ENCODE measurements at regions of chr1 and their contacts with region 1.

Region 1: DNA sequence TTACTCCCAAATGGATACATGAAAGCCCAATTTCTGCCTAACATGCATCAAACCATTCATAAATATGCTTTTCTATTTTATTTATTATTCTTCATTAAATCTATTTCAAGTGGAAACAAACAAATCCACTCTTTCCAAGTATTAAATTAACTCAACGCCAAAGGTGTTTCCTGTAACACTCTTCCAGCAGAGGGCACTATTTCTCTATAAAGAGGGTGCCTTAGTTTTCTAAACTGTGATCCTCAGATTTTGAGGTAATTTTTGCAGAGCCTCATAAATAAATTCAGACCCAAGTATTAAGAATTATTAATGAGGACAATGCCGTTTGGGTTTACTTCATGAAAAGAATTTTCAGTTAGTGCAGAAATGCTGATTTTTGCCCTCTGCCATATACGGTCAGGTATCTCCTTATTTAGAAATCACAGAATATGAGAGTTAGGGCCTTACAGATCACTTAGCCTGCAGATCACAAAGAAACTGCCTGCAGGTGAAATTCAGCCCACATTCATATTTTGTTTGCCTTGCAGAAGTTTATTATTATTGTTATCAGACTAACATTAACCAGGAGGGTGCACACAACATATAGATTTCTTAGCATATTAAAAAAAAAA is 40.1 kb upstream of the MYSM1 start:
- DNase-seq: peak; percentile 39
- ATAC-seq: peak; percentile 75; the same call in 1 of the 2 replicates
- H3K4me3 ChIP-seq: no peak overlapping the region
- H3K27ac ChIP-seq: no peak overlapping the region
- H3K4me1 ChIP-seq: no peaks in the 10 kb centered on the region; a peak in 1 of 4 replicates
- H3K27me3 ChIP-seq: no peaks in the 10 kb centered on the region
- CTCF ChIP-seq: peak; percentile 59 to 87 (median 83)
- POLR2A ChIP-seq: no peak
- RAD21 ChIP-seq: peak; percentile 96

Region 2: DNA sequence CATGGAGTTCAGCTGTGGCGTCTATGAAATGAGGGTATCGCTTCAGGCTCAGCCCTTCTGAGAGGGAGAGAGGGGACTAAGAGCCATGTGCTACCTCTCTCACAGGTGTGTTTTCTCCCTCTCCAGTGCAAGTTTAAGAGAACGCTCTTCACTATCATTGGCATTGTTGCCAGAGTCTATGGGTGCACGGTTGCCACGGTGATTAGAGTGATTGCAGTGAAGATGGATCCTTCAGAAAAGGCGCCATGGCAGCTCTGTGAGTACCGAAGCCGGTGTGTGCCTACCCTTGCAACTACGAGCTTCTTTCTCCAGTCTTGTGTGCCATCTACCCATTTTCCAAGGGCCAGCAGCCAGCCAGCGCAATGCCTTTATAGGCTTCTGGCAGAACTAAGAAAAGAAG is 483.9 kb before region 1 on chr1:
- CTCF ChIA-PET with region 1: no interaction called
- POLR2A ChIA-PET with region 1: no interaction called
- RAD21 ChIA-PET with region 1: no interaction called
- intact Hi-C with region 1: no loop called
- DNase-seq: no peak
- ATAC-seq: no peak
- H3K4me3 ChIP-seq: no peak overlapping the region
- H3K27ac ChIP-seq: no peak overlapping the region
- H3K4me1 ChIP-seq: no peaks in the 10 kb centered on the region
- H3K27me3 ChIP-seq: peaks cover 36% of the 10 kb centered on the region
- CTCF ChIP-seq: no peak
- POLR2A ChIP-seq: no peak
- RAD21 ChIP-seq: no peak

Region 3: DNA sequence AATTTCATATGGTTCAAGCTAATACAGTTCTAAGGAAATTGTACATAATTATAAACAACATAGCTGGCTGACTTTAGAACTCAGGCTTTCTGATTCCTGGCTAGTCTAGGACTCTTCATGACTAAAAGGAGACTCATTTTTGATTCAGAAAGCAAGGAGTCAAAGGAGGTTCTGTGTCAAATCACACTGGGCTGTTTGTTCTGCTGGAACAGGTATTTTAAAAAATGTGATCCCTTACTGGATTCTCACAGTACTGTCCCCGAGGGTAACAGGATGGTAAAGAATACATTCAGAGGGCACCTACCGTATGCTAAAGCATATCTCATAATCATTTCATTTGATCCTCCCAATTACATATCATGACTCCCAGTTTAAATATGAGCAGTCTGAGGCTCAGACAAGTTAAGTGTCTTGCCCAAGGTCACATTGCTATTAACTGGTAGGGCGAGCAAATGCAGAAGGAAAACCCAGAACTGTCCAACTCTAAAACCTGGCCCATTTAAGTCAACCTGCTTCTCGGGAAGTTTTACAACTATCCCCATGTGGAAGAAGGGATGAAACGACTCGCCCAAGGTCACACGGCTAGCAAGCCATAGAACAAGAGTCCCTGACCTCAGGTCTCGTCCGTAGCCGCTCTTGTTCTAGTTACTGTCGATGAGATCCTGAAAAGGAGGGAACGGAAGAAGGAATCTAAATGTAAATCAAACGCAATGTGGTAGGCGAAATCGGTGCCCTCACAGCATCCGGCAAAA is 40.8 kb before region 1 on chr1:
- CTCF ChIA-PET with region 1: no interaction called
- POLR2A ChIA-PET with region 1: no interaction called
- RAD21 ChIA-PET with region 1: no interaction called
- intact Hi-C with region 1: no loop called
- DNase-seq: no peak
- ATAC-seq: peak; percentile 15
- H3K4me3 ChIP-seq: peak overlapping the region; percentile 73 to 85
- H3K27ac ChIP-seq: peak overlapping the region; percentile 48
- H3K4me1 ChIP-seq: peaks cover 6 to 14% of the 10 kb centered on the region in 2 experiments; a peak in 3 of 4 replicates
- H3K27me3 ChIP-seq: no peaks in the 10 kb centered on the region
- CTCF ChIP-seq: no peak
- POLR2A ChIP-seq: peak; percentile 1
- RAD21 ChIP-seq: no peak

Region 4: GRCh38 chr1:58768971-58769808 is 29.2 kb after region 1 on chr1:
- CTCF ChIA-PET with region 1: interaction called, 3 read pairs
- POLR2A ChIA-PET with region 1: no interaction called
- RAD21 ChIA-PET with region 1: no interaction called
- intact Hi-C with region 1: loop called (anchors 2 kb)
- DNase-seq: no peak
- ATAC-seq: peak; percentile 84
- H3K4me3 ChIP-seq: no peak overlapping the region
- H3K27ac ChIP-seq: no peak overlapping the region
- H3K4me1 ChIP-seq: no peaks in the 10 kb centered on the region; a peak in 1 of 4 replicates
- H3K27me3 ChIP-seq: no peaks in the 10 kb centered on the region
- CTCF ChIP-seq: peak; percentile 68 to 86 (median 83)
- POLR2A ChIP-seq: no peak
- RAD21 ChIP-seq: peak; percentile 87

Region 5: GRCh38 chr1:59699227-59699847 is 959.4 kb after region 1 on chr1:
- CTCF ChIA-PET with region 1: interaction called, 14 read pairs
- POLR2A ChIA-PET with region 1: no interaction called
- RAD21 ChIA-PET with region 1: no interaction called
- intact Hi-C with region 1: loop called (anchors 1 kb)
- DNase-seq: peak; percentile 15
- ATAC-seq: no peak
- H3K4me3 ChIP-seq: no peak overlapping the region
- H3K27ac ChIP-seq: no peak overlapping the region
- H3K4me1 ChIP-seq: no peaks in the 10 kb centered on the region
- H3K27me3 ChIP-seq: no peaks in the 10 kb centered on the region
- CTCF ChIP-seq: peak; percentile 67 to 93 (median 89); a peak in 5 of 6 replicates
- POLR2A ChIP-seq: no peak
- RAD21 ChIP-seq: peak; percentile 93

Region 6: GRCh38 chr1:59759156-59759925 is 1019.4 kb after region 1 on chr1:
- CTCF ChIA-PET with region 1: interaction called, 8 read pairs
- POLR2A ChIA-PET with region 1: no interaction called
- RAD21 ChIA-PET with region 1: no interaction called
- intact Hi-C with region 1: loop called (anchors 1 kb)
- DNase-seq: peak; percentile 59
- ATAC-seq: peak; percentile 96
- H3K4me3 ChIP-seq: 0 out of 4 replicates have a peak overlapping the region, but pooled peaks of 1 of the 2 experiments have one; percentile 7
- H3K27ac ChIP-seq: no peak overlapping the region
- H3K4me1 ChIP-seq: peaks cover 0 to 8% of the 10 kb centered on the region in 2 experiments; a peak in 2 of 4 replicates
- H3K27me3 ChIP-seq: no peaks in the 10 kb centered on the region
- CTCF ChIP-seq: peak; percentile 67 to 95 (median 92)
- POLR2A ChIP-seq: no peak
- RAD21 ChIP-seq: peak; percentile 99